Esophagus muscularis mucosa (tissue), 4 donors: ENCODE measurements at regions of chr2 and their contacts with region 1.

Region 1: DNA sequence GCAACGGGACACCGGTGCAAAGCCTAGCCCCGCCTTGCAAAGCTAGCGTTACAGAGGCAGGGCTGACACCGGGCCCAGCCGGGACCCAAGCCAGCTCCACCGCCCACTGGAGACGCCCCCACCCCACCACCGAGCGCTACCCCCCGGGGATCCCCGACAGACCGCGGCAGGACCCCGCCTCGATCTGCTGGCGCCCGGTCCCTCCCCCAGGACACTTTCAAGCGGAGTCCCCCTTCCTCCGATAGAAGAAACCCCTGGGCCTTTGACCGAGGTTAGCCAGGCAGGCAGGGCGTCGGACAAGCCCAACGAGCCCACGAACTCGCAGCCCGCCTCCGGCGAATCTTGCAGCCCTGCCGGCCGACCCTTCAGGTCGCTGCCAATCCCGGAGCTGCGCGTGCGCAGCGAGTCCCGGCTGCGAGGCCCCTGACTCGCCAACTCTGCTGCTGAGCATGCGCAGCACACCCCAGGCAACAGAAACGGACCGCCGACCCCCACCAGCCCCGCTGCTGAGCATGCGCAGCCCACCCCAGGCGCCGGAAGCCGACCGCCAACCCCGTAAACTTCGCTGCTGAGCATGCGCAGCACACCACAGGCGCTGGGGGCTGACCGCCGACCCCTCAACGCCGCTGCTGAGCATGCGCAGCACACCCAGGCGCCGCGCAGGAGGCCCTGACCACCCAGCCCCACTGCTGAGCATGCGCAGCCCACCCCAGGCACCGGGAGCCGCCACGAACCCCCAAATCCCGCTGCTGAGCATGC is 656 bp downstream of the ADI1 start:
- DNase-seq: peak; percentile 98
- H3K4me3 ChIP-seq: peak overlapping the region; percentile 86 to 96 (median 91)
- H3K27ac ChIP-seq: peak overlapping the region; percentile 99 to 100 (median 100)
- H3K4me1 ChIP-seq: peaks cover 20 to 55% (median 47%) of the 10 kb centered on the region in 4 donors
- H3K27me3 ChIP-seq: no peaks in the 10 kb centered on the region
- CTCF ChIP-seq: no peak
- EP300 ChIP-seq: no peak
- POLR2A ChIP-seq: peak; percentile 56

Region 2: DNA sequence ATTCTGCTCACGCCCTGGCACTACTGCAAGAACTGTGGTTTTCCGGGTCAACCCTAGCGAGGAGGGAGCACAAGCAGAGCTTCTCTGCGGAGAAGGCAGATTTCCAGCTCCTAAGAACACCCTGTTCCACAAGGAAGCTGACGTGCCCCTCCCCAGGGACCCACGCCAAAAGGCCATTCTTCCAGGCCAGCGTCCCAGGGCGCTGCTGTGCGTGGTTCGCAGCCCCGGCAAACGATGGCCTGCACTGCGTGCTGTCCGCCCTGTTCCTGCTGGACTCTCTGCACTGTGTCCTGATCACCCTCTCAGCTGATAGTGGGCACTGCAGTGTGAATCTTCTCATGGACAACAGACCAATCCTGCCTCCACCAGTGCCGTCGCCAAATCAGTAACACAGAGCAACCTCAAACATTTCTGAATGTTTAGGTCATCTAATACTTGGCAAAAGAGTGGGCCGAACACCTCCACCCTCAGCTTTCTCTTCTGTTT is 48.5 kb before region 1 on chr2:
- intact Hi-C with region 1: loop called (anchors 5 kb)
- DNase-seq: peak; percentile 93
- H3K4me3 ChIP-seq: peak overlapping the region in 3 of 4 donors; percentile 7 to 32 (median 27)
- H3K27ac ChIP-seq: peak overlapping the region; percentile 83 to 88 (median 84)
- H3K4me1 ChIP-seq: peaks cover 32 to 47% (median 41%) of the 10 kb centered on the region in 4 donors
- H3K27me3 ChIP-seq: no peaks in the 10 kb centered on the region
- CTCF ChIP-seq: no peak
- EP300 ChIP-seq: peak; percentile 83
- POLR2A ChIP-seq: no peak

Region 3: GRCh38 chr2:3759331-3759730 is 240.7 kb after region 1 on chr2:
- intact Hi-C with region 1: no loop called
- DNase-seq: no peak
- H3K4me3 ChIP-seq: no peak overlapping the region
- H3K27ac ChIP-seq: no peak overlapping the region
- H3K4me1 ChIP-seq: peaks cover 0 to 7% (median 6%) of the 10 kb centered on the region in 4 donors
- H3K27me3 ChIP-seq: peaks cover 0 to 24% (median 0%) of the 10 kb centered on the region in 4 donors
- CTCF ChIP-seq: no peak
- EP300 ChIP-seq: no peak
- POLR2A ChIP-seq: no peak